ENCODE measurements at regions of chr5 and their contacts with region 1.

Region 1: GRCh38 chr5:42889311-42889933 is 77.7 kb upstream of the SELENOP start:
- DNase-seq: peak; percentile 57 to 69
- ATAC-seq: peak; percentile 95 to 98
- H3K4me3 ChIP-seq: no peak overlapping the region
- H3K27ac ChIP-seq: no peak overlapping the region
- H3K4me1 ChIP-seq: no peaks in the 10 kb centered on the region
- H3K27me3 ChIP-seq: no peaks in the 10 kb centered on the region
- CTCF ChIP-seq: peak; percentile 70 to 96 (median 84)
- POLR2A ChIP-seq: no peak

Region 2: DNA sequence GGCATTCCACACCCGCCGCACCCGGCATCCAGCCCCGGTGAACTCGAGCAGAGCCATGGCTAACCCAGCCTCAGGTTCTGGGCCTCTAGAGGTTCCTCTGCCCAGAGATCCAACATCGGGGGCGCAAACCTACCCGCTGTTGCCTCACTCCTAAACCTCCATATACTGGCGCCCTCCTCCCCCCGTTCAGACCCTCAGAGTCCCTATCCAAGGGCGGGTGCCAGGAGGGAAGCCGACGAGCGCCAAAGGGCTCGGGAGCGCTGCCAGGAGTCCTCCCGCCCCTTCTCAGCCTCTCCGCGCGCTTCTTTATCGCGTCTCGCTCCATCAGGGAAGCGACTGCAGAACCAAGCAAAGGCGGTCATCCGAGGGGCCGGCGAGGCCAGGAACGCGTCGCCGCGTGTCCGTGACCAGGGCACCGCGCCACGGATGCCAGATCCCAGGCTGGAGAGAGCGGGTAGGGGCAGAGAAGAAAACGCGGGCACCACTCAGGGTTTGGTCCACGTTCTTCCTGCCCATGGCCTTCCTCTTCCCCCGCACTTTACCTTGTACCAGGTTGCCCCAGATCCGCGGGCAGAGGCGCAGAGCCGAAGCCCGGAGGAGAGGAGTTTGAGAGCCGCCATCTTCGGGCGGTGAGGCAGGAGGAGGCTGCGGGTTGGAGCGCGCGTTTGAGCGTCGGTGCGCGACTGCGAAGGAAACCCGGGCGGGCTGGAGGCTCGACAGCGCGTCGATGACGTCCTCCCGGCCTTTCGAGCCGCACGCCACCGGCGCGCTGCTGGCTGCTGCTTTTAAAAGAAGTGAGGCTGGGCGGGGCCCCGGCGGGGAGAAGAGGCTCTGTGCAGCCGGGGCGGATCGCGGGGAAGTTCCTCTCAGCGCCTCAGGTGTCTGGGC is 1019.4 kb before region 1 on chr5 and contains the start of gene OXCT1:
- in situ Hi-C with region 1: loop called in 2 of 4 experiments (anchors 10 to 25 kb)
- intact Hi-C with region 1: no loop called
- DNase-seq: peak; percentile 38 to 62
- ATAC-seq: peak; percentile 71 to 80
- H3K4me3 ChIP-seq: peak within 1 kb of the TSS; percentile 74 to 87 (median 84)
- H3K27ac ChIP-seq: peak within 1 kb of the TSS; percentile 80 to 89 (median 86)
- H3K4me1 ChIP-seq: peaks cover 7 to 11% of the 10 kb centered on the region in 2 donors
- H3K27me3 ChIP-seq: no peaks in the 10 kb centered on the region
- CTCF ChIP-seq: no peak
- POLR2A ChIP-seq: peak; percentile 62 to 81
- total RNA-seq, gene OXCT1: 9.4 to 45.4 (median 20.5) TPM

Region 3: GRCh38 chr5:42779083-42779482 is 110.3 kb before region 1 on chr5:
- in situ Hi-C with region 1: loop called in 1 of 4 experiments (anchors 25 kb)
- intact Hi-C with region 1: no loop called
- DNase-seq: no peak
- ATAC-seq: no peak
- H3K4me3 ChIP-seq: no peak overlapping the region
- H3K27ac ChIP-seq: no peak overlapping the region
- H3K4me1 ChIP-seq: no peaks in the 10 kb centered on the region
- H3K27me3 ChIP-seq: no peaks in the 10 kb centered on the region
- CTCF ChIP-seq: no peak
- POLR2A ChIP-seq: no peak

Region 4: GRCh38 chr5:42811591-42812446 is 77.6 kb before region 1 on chr5 and contains the start of gene SELENOP:
- in situ Hi-C with region 1: loop called in 1 of 4 experiments (anchors 10 kb)
- intact Hi-C with region 1: loop called (anchors 1 kb)
- DNase-seq: peak; percentile 72 to 74
- ATAC-seq: peak; percentile 96 to 97
- H3K4me3 ChIP-seq: peak within 1 kb of the TSS; percentile 56 to 76 (median 64)
- H3K27ac ChIP-seq: peak within 1 kb of the TSS; percentile 81 to 91 (median 86)
- H3K4me1 ChIP-seq: peaks cover 27 to 30% of the 10 kb centered on the region in 2 donors
- H3K27me3 ChIP-seq: no peaks in the 10 kb centered on the region
- CTCF ChIP-seq: no peak
- POLR2A ChIP-seq: peak; percentile 90 to 95
- total RNA-seq, gene SELENOP: 231 to 290 (median 243) TPM

Measured in gastrocnemius medialis (tissue), 4 donors.